ENCODE measurements at regions of chr4 and their contacts with region 1.

Region 1: DNA sequence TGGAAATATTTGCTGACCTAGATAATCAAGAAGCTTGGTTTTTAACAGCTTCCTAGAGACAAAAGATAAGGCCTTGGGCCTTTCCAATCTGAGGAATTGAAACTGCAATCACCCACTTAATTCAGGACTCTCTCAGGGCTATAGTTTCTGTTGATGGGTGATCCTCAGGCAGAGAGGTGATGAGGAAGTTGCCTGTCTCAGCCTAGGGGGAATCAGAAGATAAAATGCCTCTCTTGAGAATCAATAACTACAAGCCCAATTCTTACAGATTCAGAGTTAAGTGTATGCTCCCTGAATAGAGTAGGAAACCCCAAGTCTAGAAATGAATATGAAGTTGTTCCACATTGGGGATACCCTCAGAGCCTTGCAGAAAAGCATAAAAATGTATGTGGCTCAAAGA is 45.5 kb downstream of the NFKB1 start:
- DNase-seq: no peak
- H3K4me3 ChIP-seq: no peak overlapping the region
- H3K27ac ChIP-seq: no peak overlapping the region
- H3K4me1 ChIP-seq: no peaks in the 10 kb centered on the region
- CTCF ChIP-seq: no peak

Region 2: DNA sequence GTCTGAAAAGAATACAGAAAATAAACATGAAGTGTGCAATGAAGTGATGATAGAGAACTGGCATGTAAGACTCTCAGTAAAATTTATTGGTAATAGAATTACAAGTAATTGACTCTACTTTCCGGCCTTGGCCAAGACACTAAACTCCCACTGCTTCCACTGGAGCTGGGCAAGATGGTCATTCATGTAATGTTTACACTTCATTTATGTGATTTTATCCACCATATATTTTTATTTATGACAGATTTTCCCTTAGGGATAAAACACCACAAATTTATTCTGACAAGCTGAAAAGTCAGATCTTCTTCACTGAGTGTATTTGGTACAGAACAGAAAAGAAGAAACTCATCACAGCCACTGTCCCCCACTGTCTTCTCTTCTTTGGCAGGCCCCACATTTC is 393.2 kb before region 1 on chr4:
- CTCF ChIA-PET with region 1: no interaction called
- POLR2A ChIA-PET with region 1: no interaction called
- intact Hi-C with region 1: no loop called
- DNase-seq: no peak
- H3K4me3 ChIP-seq: no peak overlapping the region
- H3K27ac ChIP-seq: no peak overlapping the region
- H3K4me1 ChIP-seq: no peaks in the 10 kb centered on the region
- CTCF ChIP-seq: no peak

Region 3: GRCh38 chr4:102535398-102536082 is 11.1 kb before region 1 on chr4:
- CTCF ChIA-PET with region 1: no interaction called
- POLR2A ChIA-PET with region 1: interaction called, 11 read pairs
- intact Hi-C with region 1: no loop called
- DNase-seq: no peak
- H3K4me3 ChIP-seq: no peak overlapping the region
- H3K27ac ChIP-seq: no peak overlapping the region
- H3K4me1 ChIP-seq: no peaks in the 10 kb centered on the region
- CTCF ChIP-seq: no peak

Measured in OCI-LY7 (cell line).